Dorsolateral prefrontal cortex (tissue), 120 donors: ENCODE measurements at regions of chr1 and their contacts with region 1.

Region 1: DNA sequence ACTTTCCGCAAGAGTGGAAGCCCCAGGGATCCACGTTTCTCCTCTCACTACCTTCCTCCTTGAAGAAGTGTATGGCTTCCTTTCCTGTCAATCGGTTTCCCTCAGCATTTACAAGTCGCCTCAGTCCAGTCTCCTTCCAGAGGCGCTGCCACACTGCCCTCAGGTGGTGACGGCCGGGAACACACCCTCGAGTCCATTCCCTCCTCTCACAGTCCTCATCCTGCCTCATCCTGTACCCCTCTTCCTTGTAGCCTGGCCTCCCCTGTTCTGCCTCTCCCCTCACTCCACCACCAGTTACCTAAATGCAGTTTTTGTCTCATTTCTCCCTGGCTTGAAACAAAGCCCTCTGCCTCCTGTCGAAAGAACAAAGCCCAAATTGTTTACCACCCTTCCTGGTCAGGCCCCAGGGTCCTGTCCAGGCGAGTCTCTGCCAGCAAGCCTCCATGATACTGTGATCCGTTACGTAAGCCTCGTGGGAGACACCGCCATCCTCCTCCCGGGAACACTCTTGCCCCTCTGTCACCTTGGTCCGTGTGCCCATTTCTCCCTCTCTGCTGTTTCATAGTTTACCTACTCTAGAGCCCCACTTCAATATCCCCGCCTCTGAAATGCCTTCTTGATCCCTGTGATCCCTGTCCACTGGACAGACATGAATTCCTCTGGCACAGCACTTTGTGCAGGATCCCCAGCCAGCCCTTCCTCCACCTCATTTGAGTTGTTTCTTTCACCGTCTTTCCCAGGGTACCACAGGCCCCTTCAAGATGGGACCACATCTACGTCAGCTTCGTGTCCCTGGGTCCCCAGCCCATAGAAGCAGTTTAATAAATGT is 23.3 kb upstream of the LSM10 start:
- DNase-seq: peak; percentile 78 to 94 (median 88)
- H3K4me3 ChIP-seq: no peak overlapping the region
- H3K27ac ChIP-seq: peak overlapping the region in 29 of 59 donors; percentile 3 to 66 (median 44)
- H3K27me3 ChIP-seq: no peaks in the 10 kb centered on the region
- CTCF ChIP-seq: peak; percentile 70 to 97 (median 94)

Region 2: GRCh38 chr1:36055706-36056105 is 365.3 kb before region 1 on chr1:
- intact Hi-C with region 1: no loop called
- DNase-seq: no peak
- H3K4me3 ChIP-seq: no peak overlapping the region
- H3K27ac ChIP-seq: no peak overlapping the region
- H3K27me3 ChIP-seq: no peaks in the 10 kb centered on the region
- CTCF ChIP-seq: no peak

Region 3: DNA sequence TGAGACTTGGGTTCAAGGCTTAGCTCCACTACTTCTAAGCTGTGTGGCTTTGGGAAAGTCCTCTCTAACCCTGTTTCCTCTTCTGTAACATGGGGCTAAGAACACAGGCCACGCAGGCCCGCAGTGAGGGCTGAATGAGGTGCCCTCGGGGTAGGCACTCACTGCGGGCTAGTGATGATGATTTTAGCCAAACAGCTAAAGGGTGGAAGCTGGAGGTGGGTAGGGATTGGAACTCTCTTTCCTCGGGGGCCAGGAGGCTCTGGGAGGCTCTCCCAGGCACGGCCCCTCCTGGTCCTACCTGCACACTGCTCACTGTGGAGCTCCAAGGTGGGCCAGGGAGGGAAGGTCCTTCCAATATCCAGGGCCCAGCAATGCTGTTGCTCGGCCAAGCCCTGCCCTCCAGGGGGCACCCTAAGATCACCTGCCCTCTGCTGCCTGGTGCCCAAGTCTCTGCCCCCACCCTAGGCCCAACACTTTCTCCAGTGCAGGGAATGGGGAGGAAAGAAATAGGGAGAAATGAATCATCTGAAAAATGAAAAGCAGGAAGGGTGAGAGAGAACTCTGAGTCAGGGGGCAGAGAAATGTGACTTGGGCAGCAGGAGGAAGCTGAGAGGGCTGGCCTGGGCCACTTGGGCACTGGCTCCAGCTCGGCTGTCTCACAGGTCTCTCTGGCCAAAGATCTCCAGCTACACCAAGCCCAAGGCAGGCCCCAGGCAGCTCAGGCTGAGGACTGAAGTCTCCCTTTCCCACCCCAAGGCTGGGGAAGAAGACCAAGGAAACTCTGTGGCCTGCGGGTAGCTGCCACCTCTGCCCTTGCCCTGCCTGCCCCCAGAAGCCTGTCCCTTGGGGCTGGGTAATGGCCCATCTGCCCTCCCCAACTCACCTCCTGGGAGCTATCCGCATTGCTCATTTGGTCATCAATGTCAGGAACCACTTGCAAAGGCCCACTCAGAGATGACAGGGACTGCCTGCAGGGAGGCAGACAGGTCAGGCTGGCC is 78.3 kb before region 1 on chr1:
- intact Hi-C with region 1: loop called (anchors 1 to 2 kb)
- DNase-seq: peak in 6 of 10 donors; percentile 33 to 65 (median 52)
- H3K4me3 ChIP-seq: no peak overlapping the region
- H3K27ac ChIP-seq: peak overlapping the region in 10 of 59 donors; percentile 5 to 44 (median 18)
- H3K27me3 ChIP-seq: no peaks in the 10 kb centered on the region
- CTCF ChIP-seq: peak in 55 of 56 donors; percentile 31 to 83 (median 61)

Region 4: GRCh38 chr1:36463803-36464604 is 43.0 kb after region 1 on chr1 and contains the start of gene MRPS15:
- intact Hi-C with region 1: no loop called
- DNase-seq: peak; percentile 96 to 99 (median 98)
- H3K4me3 ChIP-seq: peak within 1 kb of the TSS; percentile 70 to 100 (median 93)
- H3K27ac ChIP-seq: peak within 1 kb of the TSS; percentile 8 to 97 (median 91)
- H3K27me3 ChIP-seq: no peaks in the 10 kb centered on the region
- CTCF ChIP-seq: peak in 27 of 56 donors; percentile 11 to 55 (median 32)
- total RNA-seq, gene MRPS15: 28.8 to 59.3 (median 43.8) TPM

Region 5: GRCh38 chr1:36603461-36603860 is 182.4 kb after region 1 on chr1:
- intact Hi-C with region 1: no loop called
- DNase-seq: no peak
- H3K4me3 ChIP-seq: no peak overlapping the region
- H3K27ac ChIP-seq: no peak overlapping the region
- H3K27me3 ChIP-seq: peaks cover 0 to 4% (median 0%) of the 10 kb centered on the region in 45 donors
- CTCF ChIP-seq: no peak